Left cardiac atrium (tissue), 4 donors: ENCODE measurements at regions of chr11 and their contacts with region 1.

Region 1: GRCh38 chr11:128552783-128553661 is 34.3 kb downstream of the ETS1 start:
- DNase-seq: no peak
- ATAC-seq: peak in 1 of 2 donors; percentile 22

Region 2: DNA sequence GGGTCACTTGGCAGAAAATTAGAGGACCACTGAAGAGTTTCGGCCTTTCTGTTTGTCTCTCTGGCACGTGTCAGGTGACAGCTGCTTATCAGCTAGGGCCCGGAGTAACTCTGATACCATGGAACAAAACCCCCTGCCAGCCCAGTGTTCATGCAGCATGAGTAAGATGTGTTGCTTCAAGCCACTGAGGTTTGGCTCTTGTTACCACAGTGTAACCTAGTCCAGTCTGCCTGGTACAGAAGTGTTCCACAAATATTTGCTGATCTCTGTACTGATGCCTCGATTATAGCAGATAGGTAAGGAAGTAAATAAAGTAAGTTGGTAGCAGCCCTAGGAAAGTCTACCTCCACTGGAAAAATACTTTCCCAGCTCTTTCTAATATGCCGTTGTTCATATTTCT is 54.8 kb after region 1 on chr11:
- intact Hi-C with region 1: loop called in 1 of 2 experiments (anchors 5 kb)
- DNase-seq: no peak
- ATAC-seq: peak in 1 of 2 donors; percentile 34

Region 3: DNA sequence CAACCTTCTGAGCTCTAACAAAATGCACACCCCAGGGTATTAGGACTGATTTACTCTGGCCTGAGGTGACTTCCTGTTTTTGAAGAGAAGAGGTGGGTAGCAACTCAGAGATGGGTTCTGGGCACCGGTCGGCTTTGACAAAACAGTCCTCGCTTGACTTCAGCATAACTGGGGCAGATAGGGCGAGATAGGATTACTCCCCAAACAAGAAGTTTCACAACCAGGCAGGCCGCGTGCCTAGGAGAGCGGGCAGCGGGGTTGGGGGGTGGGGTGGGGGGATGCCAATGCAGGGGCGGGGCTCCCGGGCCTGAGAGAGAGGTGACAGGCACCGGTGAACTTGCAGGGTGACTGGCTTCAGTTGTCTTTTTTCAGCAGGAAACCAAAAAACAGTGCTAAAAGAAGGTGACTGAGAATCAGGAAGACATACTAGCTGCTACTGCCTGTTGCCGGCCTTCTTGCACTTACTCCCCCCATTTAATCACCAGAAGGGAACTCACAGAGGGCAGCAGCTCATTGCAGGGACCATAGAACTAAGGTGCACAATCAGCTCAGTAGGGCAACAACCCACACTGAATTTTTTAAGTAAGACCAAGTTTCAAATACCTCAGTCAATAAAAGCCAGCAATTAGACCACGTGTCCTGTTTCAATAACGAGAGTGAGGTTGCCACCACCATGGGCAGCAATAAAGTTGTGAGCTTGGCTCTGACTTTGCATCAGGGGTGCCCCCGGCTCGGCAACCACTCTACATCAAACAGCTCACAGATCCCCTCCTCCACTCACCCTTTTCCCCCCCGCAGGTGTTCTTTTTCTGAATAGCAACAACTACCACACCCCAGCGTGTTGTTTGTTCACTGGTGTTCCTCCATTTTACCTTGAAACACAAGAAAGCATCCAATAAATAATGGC is 71.5 kb after region 1 on chr11:
- intact Hi-C with region 1: loop called in 1 of 2 experiments (anchors 10 kb)
- DNase-seq: no peak
- ATAC-seq: peak in 1 of 2 donors; percentile 54